Heart right ventricle (tissue), 16 donors: ENCODE measurements at regions of chr19 and their contacts with region 1.

Region 1: DNA sequence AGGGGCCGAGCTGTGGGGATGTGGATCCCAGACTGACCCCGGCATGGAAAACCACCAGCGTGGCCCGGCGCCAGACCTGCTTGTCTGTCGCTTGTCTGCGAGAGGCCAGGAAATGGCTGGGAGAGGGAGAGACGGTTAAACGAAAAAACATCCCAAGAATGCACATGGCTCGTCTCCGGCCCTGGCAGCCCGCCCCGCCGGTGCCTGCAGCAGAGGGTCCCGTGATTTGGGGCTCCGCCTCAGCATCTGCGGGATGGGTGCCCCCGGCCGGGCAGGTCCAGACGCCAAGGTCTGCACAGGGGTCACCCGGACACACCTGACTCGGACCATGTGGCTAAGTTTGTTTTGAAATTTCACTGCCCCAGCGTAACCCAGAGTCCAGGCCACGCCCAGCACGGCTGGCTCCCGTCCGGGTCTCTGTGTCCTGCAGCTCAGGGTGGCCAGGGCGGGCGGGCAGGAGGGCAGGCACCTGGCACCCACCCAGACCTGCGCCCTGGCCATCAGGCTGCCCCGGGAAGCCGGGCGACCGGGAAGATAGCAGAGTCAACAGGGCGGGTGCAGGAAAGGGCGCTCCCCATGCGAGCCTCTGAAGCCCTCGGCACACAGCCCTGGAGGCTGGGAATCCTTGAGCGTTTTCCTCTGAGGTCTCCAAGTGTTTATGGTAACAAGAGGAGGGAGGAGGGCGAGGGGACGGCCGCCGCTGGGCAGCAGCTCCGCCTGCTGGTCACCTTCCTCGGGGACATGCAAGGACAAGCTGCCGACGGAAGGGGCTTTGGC is 103.2 kb downstream of the GADD45B start:
- DNase-seq: peak; percentile 89 to 92
- ATAC-seq: peak; percentile 84 to 92 (median 90)
- H3K4me3 ChIP-seq: peak overlapping the region; percentile 14 to 65 (median 50)
- H3K27ac ChIP-seq: peak overlapping the region; percentile 67 to 96 (median 82)
- H3K4me1 ChIP-seq: peaks cover 12 to 41% (median 33%) of the 10 kb centered on the region in 9 donors
- H3K27me3 ChIP-seq: no peaks in the 10 kb centered on the region
- CTCF ChIP-seq: peak; percentile 85 to 98 (median 96)

Region 2: DNA sequence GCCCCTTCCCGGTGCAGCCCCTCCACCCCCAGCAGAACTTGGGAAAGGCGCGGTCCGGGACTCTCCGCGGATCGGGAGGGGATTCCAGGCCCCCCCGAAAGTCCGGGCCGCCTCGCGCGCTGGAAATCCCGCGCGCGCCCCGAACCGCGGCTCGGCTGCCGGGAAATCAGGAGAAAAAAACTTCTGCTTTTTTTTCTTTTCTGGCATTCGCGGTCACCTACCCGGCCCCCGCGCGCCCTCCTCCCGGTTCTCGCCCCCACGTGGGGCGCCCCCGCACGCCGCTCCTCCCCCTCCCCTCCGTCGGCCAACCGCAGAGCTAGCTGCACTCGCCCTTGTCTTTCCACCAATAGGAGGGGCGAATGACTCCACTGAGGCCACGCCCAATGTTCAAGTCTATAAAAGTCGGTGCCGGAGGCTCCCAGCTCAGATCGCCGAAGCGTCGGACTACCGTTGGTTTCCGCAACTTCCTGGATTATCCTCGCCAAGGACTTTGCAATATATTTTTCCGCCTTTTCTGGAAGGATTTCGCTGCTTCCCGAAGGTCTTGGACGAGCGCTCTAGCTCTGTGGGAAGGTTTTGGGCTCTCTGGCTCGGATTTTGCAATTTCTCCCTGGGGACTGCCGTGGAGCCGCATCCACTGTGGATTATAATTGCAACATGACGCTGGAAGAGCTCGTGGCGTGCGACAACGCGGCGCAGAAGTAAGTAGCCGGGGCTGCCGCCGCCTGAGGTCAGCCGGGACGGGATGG is 103.2 kb before region 1 on chr19 and contains the start of gene GADD45B:
- intact Hi-C with region 1: loop called (anchors 1 to 10 kb)
- DNase-seq: peak; percentile 97 to 98
- ATAC-seq: peak; percentile 77 to 90 (median 86)
- H3K4me3 ChIP-seq: peak within 1 kb of the TSS; percentile 73 to 99 (median 87)
- H3K27ac ChIP-seq: peak within 1 kb of the TSS; percentile 75 to 98 (median 93)
- H3K4me1 ChIP-seq: peaks cover 9 to 50% (median 37%) of the 10 kb centered on the region in 9 donors
- H3K27me3 ChIP-seq: no peaks in the 10 kb centered on the region
- CTCF ChIP-seq: no peak
- total RNA-seq, gene GADD45B: 19.6 to 297 (median 31.3) TPM

Region 3: DNA sequence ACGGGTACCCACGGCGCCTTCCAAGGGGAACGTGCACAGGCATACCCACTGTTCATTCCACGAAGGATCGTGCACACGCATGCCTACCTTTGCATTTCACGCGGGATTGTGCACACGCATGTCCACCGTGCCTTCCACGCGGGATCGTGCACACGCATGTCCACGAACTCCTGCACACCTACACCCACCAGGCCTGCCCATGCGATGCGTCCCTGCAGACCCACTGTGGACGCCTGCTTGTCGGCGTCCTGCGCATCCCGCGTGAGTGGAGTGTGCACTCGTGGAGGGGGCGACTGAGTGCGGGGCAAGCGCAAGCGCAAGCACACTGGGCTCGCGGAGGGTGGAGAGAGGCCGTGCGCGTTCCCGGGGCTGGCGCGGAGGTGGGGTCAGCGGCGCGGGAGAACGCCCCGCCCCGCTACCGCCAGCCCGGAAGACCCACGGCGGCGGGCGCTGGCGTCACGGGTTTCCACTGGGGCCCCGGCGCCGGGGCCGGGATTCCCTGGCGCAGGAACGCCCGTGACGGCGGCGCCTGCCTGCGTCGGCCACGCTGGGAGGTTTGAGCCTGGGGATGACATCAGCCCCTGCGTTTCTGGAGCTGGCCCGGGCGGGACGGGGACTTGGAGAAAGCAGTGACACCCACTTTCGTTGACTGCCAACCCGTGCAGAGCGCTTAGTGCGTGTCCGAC is 84.5 kb before region 1 on chr19:
- intact Hi-C with region 1: loop called in 1 of 10 experiments (anchors 1 kb)
- DNase-seq: peak; percentile 83 to 86
- ATAC-seq: peak; percentile 75 to 86 (median 82)
- H3K4me3 ChIP-seq: peak overlapping the region; percentile 16 to 72 (median 64)
- H3K27ac ChIP-seq: peak overlapping the region; percentile 83 to 97 (median 92)
- H3K4me1 ChIP-seq: peaks cover 11 to 46% (median 24%) of the 10 kb centered on the region in 9 donors
- H3K27me3 ChIP-seq: peaks cover 0 to 33% (median 0%) of the 10 kb centered on the region in 7 donors
- CTCF ChIP-seq: no peak

Region 4: DNA sequence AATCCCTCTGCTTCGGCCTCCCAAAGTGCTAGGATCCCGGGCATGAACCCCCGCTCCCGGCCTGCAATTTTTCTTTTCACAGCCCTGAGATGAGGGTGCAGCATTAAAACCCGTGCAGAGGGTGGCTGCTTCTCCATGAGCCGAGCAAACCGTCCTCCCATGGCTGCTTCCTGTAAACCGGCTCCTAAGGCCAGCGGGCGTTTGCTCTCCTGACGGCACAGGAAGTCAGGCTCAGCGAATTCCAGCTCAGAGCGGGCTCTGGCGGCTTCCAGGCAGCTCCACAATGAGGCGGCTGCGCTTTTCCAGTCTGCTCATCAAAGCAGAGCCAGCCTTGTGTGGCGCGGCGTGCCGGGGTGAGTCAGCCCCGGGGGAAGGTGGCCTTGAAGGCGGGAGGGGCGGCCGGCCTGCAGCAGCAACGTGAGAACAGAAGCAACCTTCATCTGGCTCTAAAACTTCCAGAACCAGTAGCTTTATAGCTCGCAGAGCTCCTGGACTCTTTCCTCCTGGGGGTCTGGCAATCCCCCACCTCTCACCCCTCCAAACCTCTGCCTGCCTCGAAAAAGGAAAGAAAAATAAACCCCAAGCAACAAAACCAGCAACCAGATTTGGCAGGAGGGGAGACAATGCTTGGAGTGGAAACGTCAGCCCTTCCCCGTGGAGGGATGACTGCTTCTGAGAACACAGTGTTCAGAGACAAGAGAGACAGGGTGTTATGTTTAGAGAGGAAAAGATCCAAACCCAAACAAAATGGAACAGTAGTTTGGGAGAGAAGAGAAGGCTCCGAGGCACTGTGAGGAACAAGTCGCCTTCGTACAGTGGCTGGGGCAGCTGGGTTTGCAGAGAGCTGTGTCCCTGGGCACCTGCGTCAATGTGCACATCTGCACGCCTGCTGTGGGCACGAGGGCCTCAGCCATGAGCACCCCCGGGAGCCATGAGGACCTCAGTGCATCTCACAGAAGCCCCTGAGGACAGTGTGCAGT is 35.3 kb before region 1 on chr19:
- intact Hi-C with region 1: loop called in 8 of 10 experiments (anchors 2 to 5 kb)
- DNase-seq: peak; percentile 92 to 93
- ATAC-seq: peak; percentile 75 to 88 (median 82)
- H3K4me3 ChIP-seq: peak overlapping the region in 8 of 10 donors; percentile 8 to 40 (median 30)
- H3K27ac ChIP-seq: peak overlapping the region; percentile 83 to 97 (median 93)
- H3K4me1 ChIP-seq: peaks cover 35 to 80% (median 74%) of the 10 kb centered on the region in 9 donors
- H3K27me3 ChIP-seq: no peaks in the 10 kb centered on the region
- CTCF ChIP-seq: peak in 5 of 9 donors; percentile 9 to 63 (median 60)

Region 5: GRCh38 chr19:2549701-2550191 is 29.3 kb before region 1 on chr19:
- intact Hi-C with region 1: loop called in 7 of 10 experiments (anchors 2 to 5 kb)
- DNase-seq: peak; percentile 73 to 81
- ATAC-seq: peak in 7 of 8 donors; percentile 15 to 64 (median 46)
- H3K4me3 ChIP-seq: no peak overlapping the region
- H3K27ac ChIP-seq: peak overlapping the region in 9 of 10 donors; percentile 24 to 89 (median 66)
- H3K4me1 ChIP-seq: peaks cover 15 to 75% (median 41%) of the 10 kb centered on the region in 9 donors
- H3K27me3 ChIP-seq: no peaks in the 10 kb centered on the region
- CTCF ChIP-seq: peak in 1 of 9 donors; percentile 3

Region 6: GRCh38 chr19:2610637-2611482 is 31.8 kb after region 1 on chr19:
- intact Hi-C with region 1: loop called in 5 of 10 experiments (anchors 1 to 5 kb)
- DNase-seq: peak; percentile 92 to 96
- ATAC-seq: peak; percentile 87 to 96 (median 93)
- H3K4me3 ChIP-seq: peak overlapping the region in 9 of 10 donors; percentile 19 to 57 (median 52)
- H3K27ac ChIP-seq: peak overlapping the region; percentile 72 to 91 (median 86)
- H3K4me1 ChIP-seq: peaks cover 0 to 42% (median 21%) of the 10 kb centered on the region in 9 donors
- H3K27me3 ChIP-seq: peaks cover 0 to 5% (median 0%) of the 10 kb centered on the region in 7 donors
- CTCF ChIP-seq: peak; percentile 92 to 99 (median 98)